GM18951 (cell line): ENCODE measurements at regions of chr1 and their contacts with region 1.

Region 1: DNA sequence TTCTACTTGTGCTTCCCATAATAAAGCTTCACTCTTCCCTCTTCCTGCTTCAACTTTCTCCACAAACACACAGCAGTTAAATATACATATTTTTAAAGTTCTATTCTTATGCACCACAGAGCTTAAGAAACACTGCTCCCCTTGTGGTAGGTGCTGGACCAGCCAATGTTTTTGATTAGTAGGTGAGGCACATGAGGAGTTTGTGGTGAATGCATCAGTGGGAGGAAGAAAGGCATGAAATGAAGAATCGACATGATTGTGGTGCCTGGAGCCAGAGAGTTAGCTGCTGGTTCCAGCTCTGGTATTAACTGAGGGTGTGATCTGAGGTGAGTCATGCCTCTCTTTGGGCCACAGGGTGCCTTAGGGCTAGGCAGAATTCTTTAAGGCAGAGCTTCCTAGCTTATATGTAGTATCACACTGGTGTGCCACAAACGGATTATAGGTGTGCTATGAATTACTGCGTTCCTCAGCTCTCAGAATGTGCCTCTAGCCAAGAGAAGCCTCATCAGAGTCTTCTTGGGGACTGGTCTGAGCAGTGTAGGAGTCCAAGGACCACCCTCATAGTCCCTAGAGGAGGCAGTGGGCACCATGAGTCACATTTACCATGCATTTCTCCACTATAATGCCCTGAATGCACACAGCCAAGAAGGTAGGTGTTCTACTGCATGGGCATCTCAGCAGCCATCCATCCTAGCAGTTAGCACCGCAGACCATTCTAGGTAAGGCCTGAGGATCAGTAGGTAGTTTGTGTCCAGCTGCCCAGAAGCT is 97.4 kb upstream of the SGIP1 start:
- POLR2A ChIP-seq: no peak

Region 2: GRCh38 chr1:66258404-66259105 is 178.0 kb before region 1 on chr1:
- in situ Hi-C with region 1: loop called (anchors 5 kb)
- POLR2A ChIP-seq: no peak

Region 3: GRCh38 chr1:66402194-66402593 is 34.4 kb before region 1 on chr1:
- in situ Hi-C with region 1: loop called (anchors 5 kb)
- POLR2A ChIP-seq: peak; percentile 48

Region 4: GRCh38 chr1:66503841-66504470 is 67.4 kb after region 1 on chr1:
- in situ Hi-C with region 1: no loop called
- POLR2A ChIP-seq: no peak

Region 5: GRCh38 chr1:66542811-66543767 is 106.5 kb after region 1 on chr1:
- in situ Hi-C with region 1: no loop called
- POLR2A ChIP-seq: no peak